ENCODE measurements at regions of chr5 and their contacts with region 1.

Region 1: GRCh38 chr5:96614110-96614691 is 48.0 kb upstream of the CAST start:
- DNase-seq: peak; percentile 43 to 53 (median 50)
- H3K4me3 ChIP-seq: no peak overlapping the region
- H3K4me3 Mint-ChIP-seq: no peak overlapping the region
- H3K27ac ChIP-seq: no peak overlapping the region
- H3K27ac Mint-ChIP-seq: peak overlapping the region in 1 of 7 donors; percentile 54
- H3K4me1 ChIP-seq: peaks cover 4% of the 10 kb centered on the region
- H3K4me1 Mint-ChIP-seq: peaks cover 2 to 5% (median 4%) of the 10 kb centered on the region in 4 donors
- H3K27me3 ChIP-seq: peaks cover 4% of the 10 kb centered on the region
- H3K27me3 Mint-ChIP-seq: peaks cover 5 to 9% of the 10 kb centered on the region in 2 donors

Region 2: DNA sequence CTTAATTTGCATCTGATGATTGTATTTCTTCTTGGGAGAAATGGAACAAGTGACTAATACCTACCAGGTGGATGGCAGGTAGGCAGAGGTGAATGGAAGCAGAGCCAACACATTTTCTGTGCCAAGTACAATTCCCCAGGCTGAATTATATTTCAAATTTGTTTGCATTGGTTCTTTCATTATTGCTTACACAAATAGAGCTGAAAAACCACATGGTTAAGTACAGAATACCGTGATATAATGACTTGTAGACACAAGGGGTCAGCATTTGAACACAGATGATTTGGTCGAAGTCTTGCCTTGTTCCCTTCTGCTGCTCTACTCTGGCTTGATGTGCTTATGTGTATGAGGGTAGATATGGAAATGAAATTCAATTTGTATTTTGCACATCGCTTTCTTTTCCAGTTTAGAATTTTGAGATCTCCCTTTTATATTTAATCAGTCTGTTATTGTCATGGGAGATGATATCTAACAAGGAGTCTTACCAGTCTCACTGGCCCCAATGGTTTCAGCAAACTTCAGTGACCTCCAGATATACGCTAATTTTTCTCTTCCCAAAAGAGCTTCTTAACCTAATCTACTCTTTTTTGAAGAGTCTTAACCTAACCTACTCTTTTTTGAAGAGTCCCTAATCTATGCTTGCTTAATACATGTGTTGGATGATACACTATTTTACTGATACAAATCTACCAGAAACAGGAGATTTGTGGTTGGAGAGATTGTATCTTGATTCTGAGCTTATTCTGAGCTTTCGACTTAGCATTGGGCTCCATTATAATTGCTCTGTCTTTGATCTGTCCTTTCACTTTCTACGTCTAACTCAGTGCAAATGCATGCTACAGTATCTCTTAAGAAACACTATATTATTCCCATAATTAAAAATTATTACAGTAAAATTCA is 269.3 kb before region 1 on chr5:
- CTCF ChIA-PET with region 1: interaction called, 19 read pairs
- POLR2A ChIA-PET with region 1: no interaction called
- intact Hi-C with region 1: no loop called
- DNase-seq: peak in 4 of 5 donors; percentile 64 to 76 (median 68)
- H3K4me3 ChIP-seq: no peak overlapping the region
- H3K4me3 Mint-ChIP-seq: peak overlapping the region; percentile 10 to 60 (median 43)
- H3K27ac ChIP-seq: no peak overlapping the region
- H3K27ac Mint-ChIP-seq: peak overlapping the region in 6 of 7 donors; percentile 4 to 66 (median 19)
- H3K4me1 ChIP-seq: peaks cover 17% of the 10 kb centered on the region
- H3K4me1 Mint-ChIP-seq: peaks cover 12 to 18% (median 14%) of the 10 kb centered on the region in 4 donors
- H3K27me3 ChIP-seq: peaks cover 7% of the 10 kb centered on the region
- H3K27me3 Mint-ChIP-seq: peaks cover 7 to 9% of the 10 kb centered on the region in 2 donors

Region 3: DNA sequence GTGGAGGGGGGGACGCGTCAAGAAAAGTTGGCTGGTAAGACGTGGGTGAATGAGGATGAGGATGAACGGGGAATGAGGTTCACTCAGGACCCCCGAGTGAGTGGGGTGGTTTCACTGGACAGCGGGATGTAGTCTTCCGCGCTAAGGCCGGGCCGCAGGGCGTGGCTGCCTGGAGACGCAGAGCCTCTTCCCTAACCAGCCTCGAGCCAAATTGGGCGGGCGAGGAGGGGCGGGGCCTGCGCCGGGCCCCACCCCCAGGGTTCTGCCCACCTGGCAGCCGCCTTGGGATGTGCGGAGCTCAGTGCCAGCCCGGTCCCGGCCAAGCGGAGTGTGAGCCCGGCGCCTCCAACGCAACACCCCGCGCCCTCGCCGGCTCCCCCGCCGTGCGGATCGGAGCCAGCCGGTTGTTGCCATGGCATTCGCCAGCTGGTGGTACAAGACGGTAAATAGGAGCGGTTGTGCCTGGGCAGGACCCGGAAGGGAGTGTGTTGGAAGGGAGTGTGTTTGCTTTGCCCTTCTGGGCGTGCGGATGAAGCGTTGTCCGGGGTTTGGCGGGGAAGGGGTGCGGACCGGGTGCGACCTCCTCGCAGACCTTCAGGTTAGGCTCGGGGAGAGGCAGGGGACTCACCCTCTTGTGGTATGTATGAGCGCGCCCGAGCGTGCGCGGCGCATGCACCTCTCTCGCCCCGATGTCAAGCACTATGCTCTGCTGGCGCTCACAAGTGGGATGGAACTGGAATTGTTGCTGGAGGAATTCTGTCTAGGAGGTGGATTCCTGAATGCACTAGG is 48.7 kb after region 1 on chr5:
- CTCF ChIA-PET with region 1: interaction called, 7 read pairs
- POLR2A ChIA-PET with region 1: interaction called, 16 read pairs
- intact Hi-C with region 1: loop called (anchors 1 kb)
- DNase-seq: peak; percentile 84 to 89 (median 86)
- H3K4me3 ChIP-seq: peak overlapping the region; percentile 59 to 89
- H3K4me3 Mint-ChIP-seq: peak overlapping the region; percentile 96 to 98 (median 97)
- H3K27ac ChIP-seq: peak overlapping the region; percentile 93
- H3K27ac Mint-ChIP-seq: peak overlapping the region; percentile 96 to 99 (median 98)
- H3K4me1 ChIP-seq: peaks cover 48% of the 10 kb centered on the region
- H3K4me1 Mint-ChIP-seq: peaks cover 36 to 69% (median 53%) of the 10 kb centered on the region in 4 donors
- H3K27me3 ChIP-seq: no peaks in the 10 kb centered on the region
- H3K27me3 Mint-ChIP-seq: no peaks in the 10 kb centered on the region

Region 4: DNA sequence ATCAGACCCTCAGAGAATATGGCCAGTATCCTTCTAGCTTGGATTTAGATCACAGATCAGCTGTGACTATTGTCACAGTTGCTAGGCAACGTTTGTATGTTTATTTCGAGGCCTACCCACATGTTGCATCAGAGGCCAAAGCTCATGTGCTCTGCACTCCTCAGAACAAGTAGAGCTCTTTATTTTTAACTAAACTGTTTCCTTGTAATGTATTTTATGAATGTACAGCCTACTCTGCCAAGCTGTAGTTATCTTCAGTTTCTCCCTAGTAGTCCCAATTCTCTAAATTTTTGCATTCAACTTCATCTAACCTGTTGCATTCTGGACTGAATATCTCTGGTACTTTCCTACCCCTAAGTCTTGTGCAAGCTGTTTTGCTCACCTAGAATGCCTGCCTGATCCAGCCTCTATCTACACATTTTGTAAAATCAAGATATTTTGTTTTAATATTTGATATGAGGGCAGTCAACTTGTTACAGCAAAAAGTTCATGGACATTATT is 100.8 kb after region 1 on chr5:
- CTCF ChIA-PET with region 1: interaction called, 10 read pairs
- POLR2A ChIA-PET with region 1: interaction called, 4 read pairs
- intact Hi-C with region 1: no loop called
- DNase-seq: peak; percentile 59 to 83 (median 71)
- H3K4me3 ChIP-seq: no peak overlapping the region
- H3K4me3 Mint-ChIP-seq: peak overlapping the region in 6 of 8 donors; percentile 1 to 55 (median 17)
- H3K27ac ChIP-seq: peak overlapping the region; percentile 65
- H3K27ac Mint-ChIP-seq: peak overlapping the region; percentile 89 to 97 (median 94)
- H3K4me1 ChIP-seq: peaks cover 47% of the 10 kb centered on the region
- H3K4me1 Mint-ChIP-seq: peaks cover 46 to 82% (median 63%) of the 10 kb centered on the region in 4 donors
- H3K27me3 ChIP-seq: no peaks in the 10 kb centered on the region
- H3K27me3 Mint-ChIP-seq: no peaks in the 10 kb centered on the region

Region 5: DNA sequence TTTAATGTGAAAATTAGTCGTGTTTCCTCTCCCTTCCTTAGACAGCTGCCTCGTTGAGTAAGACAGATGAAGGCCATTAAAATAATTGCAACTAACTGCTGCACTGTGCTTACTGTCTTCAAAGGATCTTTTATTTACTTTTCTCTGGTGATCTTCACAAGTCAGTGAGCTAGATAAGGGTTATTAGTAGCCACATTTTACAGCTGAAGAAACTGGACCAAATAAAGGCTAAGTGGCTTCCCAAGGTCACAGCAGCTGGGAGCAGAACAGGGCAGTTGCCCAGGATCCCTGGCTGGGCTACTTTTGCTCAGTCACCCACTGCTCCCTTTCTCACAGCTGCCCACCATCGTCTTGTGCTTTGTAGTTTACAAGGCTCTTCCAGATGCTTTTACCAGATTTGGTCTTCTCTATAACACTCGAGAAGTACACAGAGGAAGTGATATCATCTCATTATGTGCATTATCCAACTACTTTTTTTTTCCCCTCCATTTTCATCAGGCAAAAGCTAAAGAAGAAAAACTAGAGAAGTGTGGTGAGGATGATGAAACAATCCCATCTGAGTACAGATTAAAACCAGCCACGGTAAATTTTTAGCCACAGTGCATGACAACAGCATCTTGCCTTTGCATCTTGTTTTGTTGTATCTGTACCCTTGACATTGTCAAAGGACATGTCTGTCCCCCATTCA is 131.8 kb after region 1 on chr5:
- CTCF ChIA-PET with region 1: interaction called, 32 read pairs
- POLR2A ChIA-PET with region 1: no interaction called
- intact Hi-C with region 1: no loop called
- DNase-seq: no peak
- H3K4me3 ChIP-seq: no peak overlapping the region
- H3K4me3 Mint-ChIP-seq: no peak overlapping the region
- H3K27ac ChIP-seq: no peak overlapping the region
- H3K27ac Mint-ChIP-seq: peak overlapping the region in 5 of 7 donors; percentile 41 to 94 (median 71)
- H3K4me1 ChIP-seq: no peaks in the 10 kb centered on the region
- H3K4me1 Mint-ChIP-seq: no peaks in the 10 kb centered on the region
- H3K27me3 ChIP-seq: no peaks in the 10 kb centered on the region
- H3K27me3 Mint-ChIP-seq: no peaks in the 10 kb centered on the region

Region 6: DNA sequence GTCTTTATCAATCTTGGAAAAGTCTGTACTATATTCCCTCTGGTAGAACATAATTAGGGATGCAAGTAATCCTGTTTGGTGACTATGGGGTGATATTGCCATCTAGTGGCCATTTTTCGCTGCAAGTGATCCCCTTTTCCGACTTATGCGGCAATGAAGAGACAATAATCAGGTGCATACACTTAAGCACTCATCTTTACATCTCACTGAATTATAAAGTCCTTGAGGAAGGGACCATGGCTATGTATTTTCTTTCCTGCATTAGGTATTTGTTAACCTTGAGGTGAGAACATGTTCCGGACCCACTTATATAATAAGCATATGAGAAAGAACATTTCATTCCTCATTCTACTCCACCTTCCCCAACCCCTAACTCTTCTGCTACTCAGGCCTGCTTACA is 547.8 kb after region 1 on chr5:
- CTCF ChIA-PET with region 1: interaction called, 16 read pairs
- POLR2A ChIA-PET with region 1: no interaction called
- intact Hi-C with region 1: loop called (anchors 1 kb)
- DNase-seq: peak; percentile 44 to 61 (median 59)
- H3K4me3 ChIP-seq: no peak overlapping the region
- H3K4me3 Mint-ChIP-seq: no peak overlapping the region
- H3K27ac ChIP-seq: no peak overlapping the region
- H3K27ac Mint-ChIP-seq: peak overlapping the region in 4 of 7 donors; percentile 18 to 83 (median 45)
- H3K4me1 ChIP-seq: peaks cover 3% of the 10 kb centered on the region
- H3K4me1 Mint-ChIP-seq: peaks cover 3 to 18% (median 6%) of the 10 kb centered on the region in 4 donors
- H3K27me3 ChIP-seq: no peaks in the 10 kb centered on the region
- H3K27me3 Mint-ChIP-seq: no peaks in the 10 kb centered on the region